ENCODE measurements at regions of chr21 and their contacts with region 1.

Region 1: DNA sequence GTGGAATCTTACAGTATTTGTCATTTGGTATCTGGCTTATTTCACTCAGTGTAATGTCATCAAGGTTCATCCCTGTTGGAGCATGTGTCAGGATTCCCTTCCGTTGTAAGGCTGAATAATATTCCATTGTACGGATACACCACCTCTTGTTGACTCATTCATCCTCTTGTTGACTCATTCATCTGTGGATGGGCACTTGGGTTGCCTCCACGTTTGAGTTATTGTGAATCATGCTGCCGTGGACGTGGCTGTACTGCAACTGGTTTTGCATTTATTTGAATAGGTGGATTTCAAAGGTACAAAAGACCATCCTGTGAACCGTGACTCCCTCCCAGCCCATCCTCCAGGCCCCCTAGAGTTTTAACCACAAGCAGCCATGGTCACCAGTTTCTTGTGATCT is 11.9 kb upstream of the TCP10L start:
- DNase-seq: no peak
- ATAC-seq: no peak
- H3K4me3 ChIP-seq: no peak overlapping the region
- H3K4me3 Mint-ChIP-seq: no peak overlapping the region
- H3K27ac ChIP-seq: no peak overlapping the region
- H3K27ac Mint-ChIP-seq: no peak overlapping the region
- H3K4me1 ChIP-seq: no peaks in the 10 kb centered on the region
- H3K4me1 Mint-ChIP-seq: no peaks in the 10 kb centered on the region
- H3K27me3 ChIP-seq: no peaks in the 10 kb centered on the region
- H3K27me3 Mint-ChIP-seq: no peaks in the 10 kb centered on the region
- CTCF ChIP-seq: no peak

Region 2: GRCh38 chr21:31786164-31786920 is 810.9 kb before region 1 on chr21:
- CTCF ChIA-PET with region 1: interaction called, 3 read pairs
- POLR2A ChIA-PET with region 1: no interaction called
- intact Hi-C with region 1: loop called in 1 of 2 experiments (anchors 5 kb)
- DNase-seq: no peak
- ATAC-seq: no peak
- H3K4me3 ChIP-seq: no peak overlapping the region
- H3K4me3 Mint-ChIP-seq: no peak overlapping the region
- H3K27ac ChIP-seq: no peak overlapping the region
- H3K27ac Mint-ChIP-seq: no peak overlapping the region
- H3K4me1 ChIP-seq: no peaks in the 10 kb centered on the region
- H3K4me1 Mint-ChIP-seq: peaks cover 12% of the 10 kb centered on the region
- H3K27me3 ChIP-seq: no peaks in the 10 kb centered on the region
- H3K27me3 Mint-ChIP-seq: peaks cover 14% of the 10 kb centered on the region
- CTCF ChIP-seq: peak; percentile 25

Region 3: DNA sequence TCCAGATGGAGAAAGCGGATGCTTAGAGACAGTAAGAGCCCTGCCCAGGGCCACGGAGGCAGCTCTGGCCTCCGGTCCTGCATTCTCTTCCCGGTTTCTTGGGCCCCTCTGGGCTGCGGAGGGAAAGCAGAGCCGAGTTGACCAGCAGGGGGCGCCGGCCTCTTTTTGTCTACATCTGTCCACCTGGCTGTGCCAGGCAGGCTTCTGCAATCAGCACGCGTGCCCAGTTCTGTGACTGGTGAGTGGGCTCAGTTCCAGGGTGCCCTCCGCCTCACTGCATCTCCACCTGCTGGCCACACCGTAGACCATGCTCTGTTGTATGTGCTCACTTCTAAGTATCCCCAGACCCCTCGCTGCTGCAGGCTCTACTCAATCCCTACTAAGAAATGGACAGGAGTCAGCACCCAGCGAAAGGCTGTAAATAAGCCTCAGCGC is 731.1 kb before region 1 on chr21:
- CTCF ChIA-PET with region 1: no interaction called
- POLR2A ChIA-PET with region 1: no interaction called
- intact Hi-C with region 1: loop called in 1 of 2 experiments (anchors 2 kb)
- DNase-seq: peak; percentile 34 to 74 (median 50)
- ATAC-seq: peak; percentile 51
- H3K4me3 ChIP-seq: no peak overlapping the region
- H3K4me3 Mint-ChIP-seq: no peak overlapping the region
- H3K27ac ChIP-seq: no peak overlapping the region
- H3K27ac Mint-ChIP-seq: no peak overlapping the region
- H3K4me1 ChIP-seq: no peaks in the 10 kb centered on the region
- H3K4me1 Mint-ChIP-seq: no peaks in the 10 kb centered on the region
- H3K27me3 ChIP-seq: peaks cover 8 to 15% of the 10 kb centered on the region in 2 experiments
- H3K27me3 Mint-ChIP-seq: peaks cover 23% of the 10 kb centered on the region
- CTCF ChIP-seq: peak; percentile 66

Region 4: DNA sequence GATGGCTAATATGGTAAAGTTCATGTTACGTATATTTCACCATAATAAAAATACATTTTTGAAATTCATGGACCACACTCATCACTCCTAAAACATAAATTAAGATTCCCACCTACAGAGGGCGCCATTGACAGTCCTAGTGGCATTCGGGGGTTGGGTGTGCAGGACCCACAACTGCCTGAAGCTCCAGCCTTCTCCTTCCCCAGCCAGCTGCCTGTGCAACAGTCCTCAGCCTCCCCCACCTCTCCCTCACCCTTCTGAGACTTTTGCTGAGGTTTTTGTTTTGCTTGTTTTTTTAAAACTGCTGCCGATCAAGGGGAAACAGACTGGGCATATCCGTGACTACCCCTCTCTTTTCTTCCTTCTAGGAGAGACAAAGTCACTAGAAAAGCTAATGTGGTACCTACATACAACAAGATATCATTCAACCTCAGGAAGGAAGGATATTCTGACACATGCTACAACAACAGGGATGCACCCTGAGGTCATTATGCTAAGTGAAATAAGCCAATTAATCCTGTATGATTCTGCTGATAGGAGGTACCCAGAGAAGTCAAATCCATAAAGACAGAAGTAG is 193.9 kb before region 1 on chr21:
- CTCF ChIA-PET with region 1: interaction called, 21 read pairs
- POLR2A ChIA-PET with region 1: interaction called, 6 read pairs
- intact Hi-C with region 1: loop called in 1 of 2 experiments (anchors 1 kb)
- DNase-seq: peak in 13 of 14 experiments; percentile 12 to 80 (median 42)
- ATAC-seq: peak; percentile 83
- H3K4me3 ChIP-seq: no peak overlapping the region
- H3K4me3 Mint-ChIP-seq: no peak overlapping the region
- H3K27ac ChIP-seq: no peak overlapping the region
- H3K27ac Mint-ChIP-seq: no peak overlapping the region
- H3K4me1 ChIP-seq: peaks cover 5% of the 10 kb centered on the region
- H3K4me1 Mint-ChIP-seq: peaks cover 9% of the 10 kb centered on the region
- H3K27me3 ChIP-seq: no peaks in the 10 kb centered on the region
- H3K27me3 Mint-ChIP-seq: peaks cover 2% of the 10 kb centered on the region
- CTCF ChIP-seq: peak; percentile 67

Region 5: GRCh38 chr21:32412162-32413014 is 184.8 kb before region 1 on chr21 and contains the start of gene EVA1C:
- CTCF ChIA-PET with region 1: interaction called, 19 read pairs
- POLR2A ChIA-PET with region 1: no interaction called
- intact Hi-C with region 1: no loop called
- DNase-seq: peak; percentile 54 to 92 (median 66)
- ATAC-seq: peak; percentile 62
- H3K4me3 ChIP-seq: peak within 1 kb of the TSS; percentile 96
- H3K4me3 Mint-ChIP-seq: peak within 1 kb of the TSS; percentile 97
- H3K27ac ChIP-seq: peak within 1 kb of the TSS; percentile 64 to 96
- H3K27ac Mint-ChIP-seq: peak within 1 kb of the TSS; percentile 97
- H3K4me1 ChIP-seq: peaks cover 31% of the 10 kb centered on the region
- H3K4me1 Mint-ChIP-seq: peaks cover 52% of the 10 kb centered on the region
- H3K27me3 ChIP-seq: no peaks in the 10 kb centered on the region
- H3K27me3 Mint-ChIP-seq: no peaks in the 10 kb centered on the region
- CTCF ChIP-seq: peak; percentile 17
- total RNA-seq, gene EVA1C: 11.1 to 12.7 TPM